Endothelial cell of umbilical vein (primary cell): ENCODE measurements at regions of chr11 and their contacts with region 1.

Region 1: GRCh38 chr11:27183672-27184457 is 143.2 kb downstream of the BBOX1 start:
- DNase-seq: peak; percentile 66
- H3K4me3 ChIP-seq: no peak overlapping the region
- H3K27ac ChIP-seq: no peak overlapping the region
- H3K4me1 ChIP-seq: no peaks in the 10 kb centered on the region
- H3K27me3 ChIP-seq: peaks cover 18 to 20% of the 10 kb centered on the region in 2 experiments
- CTCF ChIP-seq: peak; percentile 37 to 46
- POLR2A ChIP-seq: no peak

Region 2: GRCh38 chr11:27477831-27478230 is 294.0 kb after region 1 on chr11:
- CTCF ChIA-PET with region 1: interaction called, 367 read pairs
- POLR2A ChIA-PET with region 1: no interaction called
- dilution Hi-C with region 1: loop called (anchors 25 kb)
- intact Hi-C with region 1: no loop called
- DNase-seq: no peak
- H3K4me3 ChIP-seq: no peak overlapping the region
- H3K27ac ChIP-seq: no peak overlapping the region
- H3K4me1 ChIP-seq: no peaks in the 10 kb centered on the region
- H3K27me3 ChIP-seq: no peaks in the 10 kb centered on the region
- CTCF ChIP-seq: no peak
- POLR2A ChIP-seq: no peak

Region 3: DNA sequence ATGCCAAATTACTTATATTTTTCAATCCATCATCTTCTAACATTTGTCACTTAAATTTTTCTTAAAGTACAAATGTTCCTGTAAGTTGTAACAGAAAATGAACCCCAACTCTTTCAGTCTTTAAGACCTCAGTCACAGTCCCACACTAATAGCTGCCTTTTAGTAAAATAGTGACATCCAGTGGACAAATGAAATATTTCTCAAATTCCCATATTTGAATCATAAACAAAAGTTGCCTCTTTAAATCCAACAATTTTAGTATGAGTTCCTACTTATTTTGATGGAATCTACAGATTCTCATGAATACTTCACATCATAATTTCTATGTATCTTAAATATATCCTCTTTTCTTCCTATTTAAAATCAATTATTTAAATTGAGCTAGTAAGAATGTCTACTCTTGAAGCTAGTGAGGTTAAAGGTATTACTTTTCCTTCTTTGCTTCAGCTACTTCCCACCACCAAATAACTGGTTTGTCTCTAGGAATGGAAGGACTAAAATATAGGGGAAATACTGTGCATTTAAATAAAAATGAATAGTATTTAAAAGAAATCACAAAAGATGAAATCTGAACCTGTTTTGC is 313.5 kb after region 1 on chr11:
- CTCF ChIA-PET with region 1: interaction called, 68 read pairs
- POLR2A ChIA-PET with region 1: no interaction called
- dilution Hi-C with region 1: loop called (anchors 25 kb)
- intact Hi-C with region 1: no loop called
- DNase-seq: peak; percentile 43
- H3K4me3 ChIP-seq: no peak overlapping the region
- H3K27ac ChIP-seq: no peak overlapping the region
- H3K4me1 ChIP-seq: no peaks in the 10 kb centered on the region
- H3K27me3 ChIP-seq: no peaks in the 10 kb centered on the region
- CTCF ChIP-seq: peak; percentile 20 to 30
- POLR2A ChIP-seq: no peak